ENCODE measurements at regions of chr11 and their contacts with region 1.

Region 1: GRCh38 chr11:11806586-11806985 is 35.2 kb upstream of the USP47 start:
- DNase-seq: no peak
- H3K4me3 ChIP-seq: no peak overlapping the region
- H3K27ac ChIP-seq: peak overlapping the region in 1 of 4 donors; percentile 2
- H3K4me1 ChIP-seq: peaks cover 0 to 8% (median 0%) of the 10 kb centered on the region in 4 donors
- H3K27me3 ChIP-seq: no peaks in the 10 kb centered on the region
- CTCF ChIP-seq: no peak
- EP300 ChIP-seq: no peak
- POLR2A ChIP-seq: no peak

Region 2: DNA sequence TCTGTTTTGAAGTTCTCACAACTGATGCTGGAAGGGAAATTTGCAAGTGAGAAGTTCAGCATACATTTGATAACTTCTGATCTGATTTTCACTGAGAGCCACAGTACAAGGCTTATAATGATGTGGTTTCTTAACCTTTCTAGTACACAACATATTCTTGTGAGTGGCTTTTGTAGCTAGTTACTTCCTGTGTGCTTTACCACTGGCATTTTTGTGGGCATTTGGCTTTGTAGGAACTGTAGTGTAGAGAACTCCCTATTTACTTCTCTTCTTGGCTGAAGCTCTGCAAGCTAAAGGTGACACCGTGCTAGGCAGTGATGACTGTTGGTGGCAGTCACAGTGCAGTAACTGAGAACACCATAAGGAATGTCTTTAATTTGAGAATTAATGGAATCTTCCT is 50.1 kb after region 1 on chr11:
- in situ Hi-C with region 1: no loop called
- intact Hi-C with region 1: loop called (anchors 10 kb)
- DNase-seq: no peak
- H3K4me3 ChIP-seq: no peak overlapping the region
- H3K27ac ChIP-seq: peak overlapping the region in 1 of 4 donors; percentile 3
- H3K4me1 ChIP-seq: peaks cover 6 to 79% (median 23%) of the 10 kb centered on the region in 4 donors
- H3K27me3 ChIP-seq: no peaks in the 10 kb centered on the region
- CTCF ChIP-seq: no peak
- EP300 ChIP-seq: no peak
- POLR2A ChIP-seq: no peak

Region 3: GRCh38 chr11:12274558-12275197 is 468.1 kb after region 1 on chr11:
- in situ Hi-C with region 1: loop called in 1 of 4 experiments (anchors 25 kb)
- intact Hi-C with region 1: loop called (anchors 10 kb)
- DNase-seq: no peak
- H3K4me3 ChIP-seq: no peak overlapping the region
- H3K27ac ChIP-seq: no peak overlapping the region
- H3K4me1 ChIP-seq: peaks cover 0 to 10% (median 5%) of the 10 kb centered on the region in 4 donors
- H3K27me3 ChIP-seq: no peaks in the 10 kb centered on the region
- CTCF ChIP-seq: no peak
- EP300 ChIP-seq: no peak
- POLR2A ChIP-seq: no peak

Measured in transverse colon (tissue), 4 donors.